CD8-positive, alpha-beta T cell (primary cell): ENCODE measurements at regions of chr18 and their contacts with region 1.

Region 1: GRCh38 chr18:73446502-73446901 is 578.7 kb upstream of the NETO1 start:
- DNase-seq: no peak
- ATAC-seq: no peak
- H3K4me3 ChIP-seq: no peak overlapping the region
- H3K4me3 Mint-ChIP-seq: no peak overlapping the region
- H3K27ac ChIP-seq: no peak overlapping the region
- H3K27ac Mint-ChIP-seq: no peak overlapping the region
- H3K4me1 ChIP-seq: no peaks in the 10 kb centered on the region
- H3K4me1 Mint-ChIP-seq: no peaks in the 10 kb centered on the region
- H3K27me3 ChIP-seq: no peaks in the 10 kb centered on the region
- H3K27me3 Mint-ChIP-seq: no peaks in the 10 kb centered on the region
- CTCF ChIP-seq: no peak

Region 2: DNA sequence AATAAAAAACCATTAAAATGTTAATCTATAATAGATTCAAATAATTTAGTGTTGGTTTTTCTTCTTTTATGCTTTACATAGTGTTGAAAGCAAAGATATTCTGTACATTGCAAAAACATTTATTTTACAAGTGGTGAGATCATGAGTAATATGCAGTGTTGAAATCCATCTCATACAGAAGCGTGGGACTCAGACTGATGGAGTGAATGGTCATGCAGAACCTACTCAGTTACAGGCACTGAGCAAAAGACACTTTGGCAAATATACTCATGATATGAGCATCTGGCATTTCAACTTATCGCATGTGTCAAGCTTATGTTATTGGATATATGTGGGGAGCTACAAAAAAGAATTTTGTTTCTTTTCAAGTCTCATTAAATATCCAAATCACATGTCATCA is 41.5 kb after region 1 on chr18:
- CTCF ChIA-PET with region 1: no interaction called
- POLR2A ChIA-PET with region 1: no interaction called
- intact Hi-C with region 1: loop called in 1 of 2 experiments (anchors 5 kb)
- DNase-seq: no peak
- ATAC-seq: no peak
- H3K4me3 ChIP-seq: no peak overlapping the region
- H3K4me3 Mint-ChIP-seq: no peak overlapping the region
- H3K27ac ChIP-seq: no peak overlapping the region
- H3K27ac Mint-ChIP-seq: no peak overlapping the region
- H3K4me1 ChIP-seq: no peaks in the 10 kb centered on the region
- H3K4me1 Mint-ChIP-seq: no peaks in the 10 kb centered on the region
- H3K27me3 ChIP-seq: no peaks in the 10 kb centered on the region
- H3K27me3 Mint-ChIP-seq: no peaks in the 10 kb centered on the region
- CTCF ChIP-seq: no peak